Naive thymus-derived CD4-positive, alpha-beta T cell (primary cell): ENCODE measurements at regions of chr7 and their contacts with region 1.

Region 1: DNA sequence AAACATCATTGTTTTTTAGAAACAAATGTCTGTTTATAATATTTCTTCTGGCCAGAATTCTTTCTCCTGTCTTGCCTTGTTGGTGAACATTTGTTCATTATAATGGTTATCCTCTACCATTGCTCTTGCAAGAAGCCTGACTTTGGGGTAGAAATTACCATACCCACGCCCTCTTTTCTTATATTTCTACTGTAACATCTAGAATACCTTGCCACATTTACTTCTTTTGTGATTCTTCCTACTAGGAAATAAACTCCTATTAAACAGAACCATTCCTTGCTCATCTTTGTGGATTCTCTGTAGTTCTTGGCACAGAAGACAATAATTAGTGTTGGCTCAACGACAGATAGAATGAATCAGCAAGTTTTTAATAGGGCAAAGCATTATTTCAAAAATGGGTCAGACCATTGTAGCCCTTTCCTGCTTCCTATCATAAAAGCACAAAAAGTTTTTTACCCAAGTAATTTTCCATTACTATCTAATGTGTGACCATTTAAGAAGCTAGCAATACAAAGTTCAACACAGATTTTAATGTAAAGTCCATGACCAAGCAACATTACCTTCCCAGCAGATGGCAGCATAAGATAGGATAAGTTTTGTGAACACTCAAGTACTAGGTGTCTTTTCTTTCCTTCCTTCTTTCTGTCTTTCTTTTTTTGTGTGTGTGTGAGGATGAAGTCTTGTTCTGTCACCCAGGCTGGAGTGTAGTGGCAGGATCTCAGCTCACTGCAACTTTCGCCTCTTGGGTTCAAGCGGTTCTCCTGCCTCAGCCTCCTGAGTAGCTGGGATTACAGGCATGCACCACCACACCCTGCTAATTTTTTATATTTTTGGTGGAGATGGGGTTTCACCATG is 270.4 kb downstream of the HGF start:
- DNase-seq: no peak
- ATAC-seq: no peak
- H3K4me3 ChIP-seq: no peak overlapping the region
- H3K4me3 Mint-ChIP-seq: no peak overlapping the region
- H3K27ac ChIP-seq: no peak overlapping the region
- H3K27ac Mint-ChIP-seq: no peak overlapping the region
- H3K4me1 ChIP-seq: no peaks in the 10 kb centered on the region
- H3K4me1 Mint-ChIP-seq: no peaks in the 10 kb centered on the region
- H3K27me3 ChIP-seq: no peaks in the 10 kb centered on the region
- H3K27me3 Mint-ChIP-seq: no peaks in the 10 kb centered on the region

Region 2: DNA sequence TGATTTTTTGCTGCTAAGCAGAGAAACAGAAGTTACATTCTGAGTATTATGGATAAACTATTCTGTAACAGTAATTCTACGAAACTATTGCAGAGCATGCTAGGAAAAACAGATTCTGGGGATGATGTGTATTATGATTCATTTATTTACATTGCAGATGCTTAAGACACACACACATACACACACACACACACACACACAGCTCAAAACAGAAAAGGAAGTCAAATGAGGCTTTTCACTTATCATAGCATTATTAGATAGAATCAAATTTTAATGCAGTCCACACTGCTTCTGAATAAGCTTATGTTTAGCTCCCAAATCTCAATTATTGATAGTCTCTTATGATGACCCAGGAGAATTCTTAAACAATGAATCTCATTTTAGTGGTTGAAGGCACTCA is 36.8 kb before region 1 on chr7:
- CTCF ChIA-PET with region 1: no interaction called
- POLR2A ChIA-PET with region 1: no interaction called
- intact Hi-C with region 1: no loop called
- DNase-seq: no peak
- ATAC-seq: no peak
- H3K4me3 ChIP-seq: no peak overlapping the region
- H3K4me3 Mint-ChIP-seq: no peak overlapping the region
- H3K27ac ChIP-seq: no peak overlapping the region
- H3K27ac Mint-ChIP-seq: no peak overlapping the region
- H3K4me1 ChIP-seq: no peaks in the 10 kb centered on the region
- H3K4me1 Mint-ChIP-seq: no peaks in the 10 kb centered on the region
- H3K27me3 ChIP-seq: no peaks in the 10 kb centered on the region
- H3K27me3 Mint-ChIP-seq: no peaks in the 10 kb centered on the region

Region 3: DNA sequence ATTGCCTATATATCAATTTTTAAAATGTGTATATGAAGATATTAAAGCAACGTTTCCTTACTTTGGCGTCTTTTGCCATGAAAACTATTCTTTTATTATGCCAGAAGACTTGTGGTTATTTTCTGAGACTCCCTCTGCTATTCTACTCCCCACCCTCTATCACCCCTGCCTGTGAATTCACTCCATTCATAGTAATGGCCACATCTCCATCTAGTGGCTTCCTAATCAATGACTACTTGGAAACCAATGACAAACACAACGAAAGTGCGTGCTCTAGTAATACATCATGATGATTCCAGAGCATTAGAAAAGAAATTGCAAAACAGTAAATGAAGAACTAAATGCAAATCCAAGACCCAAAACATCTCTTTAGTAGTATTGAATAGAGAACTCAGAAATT is 457.0 kb after region 1 on chr7:
- CTCF ChIA-PET with region 1: no interaction called
- POLR2A ChIA-PET with region 1: no interaction called
- intact Hi-C with region 1: loop called in 1 of 2 experiments (anchors 10 kb)
- DNase-seq: no peak
- ATAC-seq: peak; percentile 64
- H3K4me3 ChIP-seq: no peak overlapping the region
- H3K4me3 Mint-ChIP-seq: no peak overlapping the region
- H3K27ac ChIP-seq: no peak overlapping the region
- H3K27ac Mint-ChIP-seq: no peak overlapping the region
- H3K4me1 ChIP-seq: no peaks in the 10 kb centered on the region
- H3K4me1 Mint-ChIP-seq: no peaks in the 10 kb centered on the region
- H3K27me3 ChIP-seq: no peaks in the 10 kb centered on the region
- H3K27me3 Mint-ChIP-seq: no peaks in the 10 kb centered on the region